ENCODE measurements at regions of chr6 and their contacts with region 1.

Region 1: GRCh38 chr6:52419809-52420670 is at the start of gene EFHC1:
- DNase-seq: peak; percentile 97
- H3K4me3 ChIP-seq: peak within 1 kb of the TSS; percentile 65 to 76 (median 74)
- H3K27ac ChIP-seq: peak within 1 kb of the TSS; percentile 99
- H3K4me1 ChIP-seq: peaks cover 31% of the 10 kb centered on the region
- H3K27me3 ChIP-seq: no peaks in the 10 kb centered on the region
- CTCF ChIP-seq: no peak
- total RNA-seq, gene EFHC1: 16.3 to 17.6 TPM

Region 2: DNA sequence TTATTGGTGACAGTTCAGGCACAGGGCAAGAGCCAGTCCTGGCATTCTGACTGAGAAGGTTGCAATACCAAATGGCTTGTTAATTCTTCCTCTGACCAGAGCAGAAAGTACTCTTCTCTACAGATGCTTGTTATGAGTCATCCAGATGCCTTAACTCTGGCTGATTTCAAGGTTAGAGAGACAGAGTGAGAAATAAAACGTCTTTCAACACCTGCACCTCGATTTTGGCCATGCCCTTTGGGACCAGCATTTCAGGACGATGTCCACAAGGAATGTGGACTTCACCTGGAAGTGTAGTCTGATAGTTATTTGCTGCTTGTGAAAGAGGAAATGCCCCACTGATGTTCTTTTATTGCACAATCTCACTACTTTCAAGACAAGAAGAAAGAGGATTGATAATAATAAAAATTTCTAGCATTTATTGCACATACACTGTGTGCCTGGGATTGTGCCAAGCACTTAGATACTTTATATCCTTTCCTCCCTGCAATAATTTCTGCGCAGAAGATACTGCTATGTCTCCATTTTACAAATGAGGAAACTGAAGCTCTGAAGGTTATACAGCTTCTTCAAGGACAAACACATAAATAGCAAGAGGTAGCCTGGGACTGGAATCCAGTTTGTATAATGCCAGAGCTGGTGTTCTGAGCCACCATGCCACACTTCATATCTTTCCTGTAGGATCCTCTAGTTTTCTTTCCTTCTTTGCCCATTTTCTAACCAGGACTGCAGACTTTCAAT is 102.0 kb before region 1 on chr6:
- CTCF ChIA-PET with region 1: no interaction called
- dilution Hi-C with region 1: no loop called
- in situ Hi-C with region 1: no loop called
- intact Hi-C with region 1: no loop called
- DNase-seq: peak; percentile 35
- H3K4me3 ChIP-seq: no peak overlapping the region
- H3K27ac ChIP-seq: no peak overlapping the region
- H3K4me1 ChIP-seq: no peaks in the 10 kb centered on the region
- H3K27me3 ChIP-seq: no peaks in the 10 kb centered on the region
- CTCF ChIP-seq: no peak

Region 3: DNA sequence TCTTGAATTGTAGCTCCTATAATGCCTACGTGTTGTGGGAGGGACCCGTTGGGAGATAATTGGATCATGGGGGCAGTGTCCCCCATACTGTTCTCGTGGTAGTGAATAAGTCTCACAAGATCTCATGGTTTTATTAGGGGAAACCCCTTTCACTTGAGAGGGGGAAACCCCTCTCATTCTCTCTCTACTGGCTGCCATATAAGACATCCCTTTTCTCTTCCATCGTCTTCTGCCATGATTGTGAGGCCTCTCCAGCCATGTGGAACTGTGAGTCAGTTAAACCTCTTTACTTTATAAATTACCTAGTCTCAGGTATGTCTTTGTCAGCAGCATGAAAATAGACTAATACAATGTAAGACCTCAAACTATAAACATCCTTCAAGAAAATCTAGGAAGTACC is 35.0 kb before region 1 on chr6:
- CTCF ChIA-PET with region 1: no interaction called
- dilution Hi-C with region 1: no loop called
- in situ Hi-C with region 1: no loop called
- intact Hi-C with region 1: no loop called
- DNase-seq: no peak
- H3K4me3 ChIP-seq: no peak overlapping the region
- H3K27ac ChIP-seq: no peak overlapping the region
- H3K4me1 ChIP-seq: peaks cover 7% of the 10 kb centered on the region
- H3K27me3 ChIP-seq: no peaks in the 10 kb centered on the region
- CTCF ChIP-seq: no peak

Region 4: GRCh38 chr6:52454556-52454955 is 34.5 kb after region 1 on chr6:
- CTCF ChIA-PET with region 1: no interaction called
- dilution Hi-C with region 1: no loop called
- in situ Hi-C with region 1: no loop called
- intact Hi-C with region 1: loop called (anchors 2 kb)
- DNase-seq: peak; percentile 85
- H3K4me3 ChIP-seq: no peak overlapping the region
- H3K27ac ChIP-seq: peak overlapping the region; percentile 73
- H3K4me1 ChIP-seq: peaks cover 17% of the 10 kb centered on the region
- H3K27me3 ChIP-seq: no peaks in the 10 kb centered on the region
- CTCF ChIP-seq: no peak

Region 5: DNA sequence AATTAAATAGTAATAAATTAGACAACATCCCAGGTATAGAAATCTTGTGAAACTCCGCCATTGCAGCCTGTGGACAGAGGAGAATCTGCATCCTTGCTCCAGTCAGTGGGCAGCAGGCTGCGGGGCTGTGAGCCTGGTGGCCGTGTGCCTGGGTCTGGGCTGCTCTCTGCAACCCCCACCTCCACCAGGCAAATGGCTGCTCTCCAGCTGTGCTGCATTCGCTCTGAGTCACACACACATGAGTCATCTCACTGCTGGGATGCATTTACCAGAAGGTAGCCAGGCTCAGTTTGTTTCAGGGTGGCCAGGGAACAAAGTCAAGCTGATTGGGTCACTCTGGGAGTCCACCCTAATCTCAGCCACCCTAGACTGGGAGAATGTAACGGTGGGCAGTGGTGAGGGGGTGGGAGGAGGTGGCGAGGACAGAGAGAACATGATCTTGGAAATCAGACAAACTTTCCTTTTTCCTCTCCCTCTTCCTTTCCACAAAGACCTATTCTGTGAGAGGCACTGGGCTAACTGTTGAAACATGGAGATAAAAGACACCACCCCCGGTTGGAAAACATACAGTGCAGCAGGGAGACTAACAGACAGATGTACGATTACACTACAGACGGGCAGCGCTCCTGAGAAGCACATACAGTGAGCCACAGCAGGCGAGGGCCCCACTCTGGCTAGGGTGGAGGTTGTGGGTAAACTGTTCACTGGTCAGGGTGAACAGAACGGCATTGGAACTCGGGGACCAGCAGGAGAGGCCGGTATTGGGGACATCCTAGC is 97.7 kb after region 1 on chr6:
- CTCF ChIA-PET with region 1: no interaction called
- dilution Hi-C with region 1: no loop called
- in situ Hi-C with region 1: no loop called
- intact Hi-C with region 1: loop called (anchors 5 kb)
- DNase-seq: peak; percentile 85
- H3K4me3 ChIP-seq: no peak overlapping the region
- H3K27ac ChIP-seq: peak overlapping the region; percentile 78
- H3K4me1 ChIP-seq: peaks cover 49% of the 10 kb centered on the region
- H3K27me3 ChIP-seq: no peaks in the 10 kb centered on the region
- CTCF ChIP-seq: no peak

Region 6: DNA sequence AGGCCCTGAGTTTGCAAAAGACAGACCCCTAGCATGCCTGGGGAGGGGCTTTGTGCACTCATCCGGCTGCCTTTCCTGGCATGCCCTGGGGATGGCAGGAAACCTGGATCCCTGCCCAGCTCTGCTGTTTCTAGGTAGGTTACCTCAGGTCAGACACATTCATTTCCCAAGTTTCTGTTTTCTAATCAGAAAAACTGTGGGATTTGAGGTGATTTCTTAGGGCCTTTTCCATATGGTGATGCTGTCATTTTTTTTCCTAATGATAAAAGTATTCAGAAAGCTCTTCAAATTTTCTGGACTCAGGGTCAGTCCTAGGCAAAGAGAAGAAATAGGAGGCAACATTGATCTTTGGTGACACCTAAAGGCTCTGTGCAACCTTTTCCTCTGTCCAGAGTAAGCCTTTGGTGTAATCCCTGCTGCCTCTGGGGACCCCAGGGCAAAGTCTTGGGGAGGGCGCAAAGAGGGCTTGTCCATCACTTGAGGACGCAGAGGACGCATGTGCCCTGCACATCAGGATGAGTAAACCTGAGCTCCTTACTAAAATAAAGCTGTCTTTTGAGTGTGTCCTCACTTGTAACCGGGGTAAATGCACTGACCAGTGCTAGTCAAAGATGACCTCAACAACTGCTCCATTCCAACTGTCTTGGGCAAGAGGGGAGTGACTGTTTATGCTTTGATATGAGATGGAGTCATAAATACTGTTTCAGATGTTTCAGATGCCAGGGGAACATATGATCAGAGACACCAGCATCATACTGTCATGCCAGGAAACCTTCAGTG is 170.3 kb after region 1 on chr6:
- CTCF ChIA-PET with region 1: no interaction called
- dilution Hi-C with region 1: no loop called
- in situ Hi-C with region 1: no loop called
- intact Hi-C with region 1: loop called (anchors 1 kb)
- DNase-seq: no peak
- H3K4me3 ChIP-seq: no peak overlapping the region
- H3K27ac ChIP-seq: no peak overlapping the region
- H3K4me1 ChIP-seq: peaks cover 8% of the 10 kb centered on the region
- H3K27me3 ChIP-seq: no peaks in the 10 kb centered on the region
- CTCF ChIP-seq: peak in 1 of 2 donors; percentile 38

Region 7: DNA sequence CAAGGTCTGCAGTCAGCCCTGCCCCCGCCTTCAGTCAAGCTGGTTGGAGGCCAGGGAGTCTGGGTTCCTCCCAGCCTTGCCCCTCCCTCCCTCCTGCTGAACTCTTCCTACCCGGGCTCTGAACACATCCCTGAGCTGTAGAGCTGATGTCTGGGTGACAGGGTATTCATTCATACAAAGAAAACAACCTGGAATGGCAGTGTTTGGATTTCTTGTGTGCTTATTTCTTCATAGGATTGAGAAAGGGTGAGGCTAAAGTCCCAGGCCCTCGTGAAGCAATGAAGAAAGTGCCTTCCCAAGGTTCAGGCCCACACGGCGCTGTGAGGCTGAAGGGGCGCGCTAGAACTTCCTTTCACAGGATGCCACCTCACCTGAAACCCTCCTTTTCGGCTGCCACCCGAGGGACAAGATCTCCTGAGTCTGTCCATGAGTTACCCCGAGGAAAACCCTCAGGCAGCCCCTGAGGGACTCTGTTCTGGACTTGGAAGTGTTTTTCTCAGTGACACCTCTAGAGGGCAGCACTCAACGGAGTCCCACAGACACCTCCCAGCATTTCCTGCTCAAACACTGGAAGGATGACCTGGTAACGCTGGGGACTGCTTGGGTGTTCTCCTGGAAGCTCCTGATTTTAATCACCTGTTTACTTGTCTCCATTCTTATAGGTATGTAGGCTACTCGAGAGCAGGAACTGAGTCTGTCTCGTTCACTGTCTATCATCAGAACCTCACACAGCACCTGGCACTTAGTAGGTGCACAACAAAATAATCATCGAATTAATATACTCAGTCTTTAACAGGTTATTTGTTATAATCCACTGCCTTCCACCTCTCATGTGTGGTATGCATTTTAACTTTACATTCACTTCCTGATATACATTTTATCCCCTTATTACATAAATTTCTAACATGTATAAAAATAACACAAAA is 395.4 kb after region 1 on chr6:
- CTCF ChIA-PET with region 1: no interaction called
- dilution Hi-C with region 1: no loop called
- in situ Hi-C with region 1: no loop called
- intact Hi-C with region 1: loop called (anchors 5 kb)
- DNase-seq: peak; percentile 31
- H3K4me3 ChIP-seq: no peak overlapping the region
- H3K27ac ChIP-seq: no peak overlapping the region
- H3K4me1 ChIP-seq: no peaks in the 10 kb centered on the region
- H3K27me3 ChIP-seq: no peaks in the 10 kb centered on the region
- CTCF ChIP-seq: peak; percentile 43 to 63